ENCODE measurements at regions of chr14 and their contacts with region 1.

Region 1: GRCh38 chr14:100383727-100384158 is 60.6 kb downstream of the SLC25A47 start:
- DNase-seq: peak; percentile 90
- H3K4me3 ChIP-seq: no peak overlapping the region
- H3K27ac ChIP-seq: no peak overlapping the region
- H3K4me1 ChIP-seq: peaks cover under 1 to 40% (median 15%) of the 10 kb centered on the region in 6 donors
- H3K27me3 ChIP-seq: no peaks in the 10 kb centered on the region
- CTCF ChIP-seq: peak; percentile 50 to 86 (median 74)
- POLR2A ChIP-seq: no peak

Region 2: DNA sequence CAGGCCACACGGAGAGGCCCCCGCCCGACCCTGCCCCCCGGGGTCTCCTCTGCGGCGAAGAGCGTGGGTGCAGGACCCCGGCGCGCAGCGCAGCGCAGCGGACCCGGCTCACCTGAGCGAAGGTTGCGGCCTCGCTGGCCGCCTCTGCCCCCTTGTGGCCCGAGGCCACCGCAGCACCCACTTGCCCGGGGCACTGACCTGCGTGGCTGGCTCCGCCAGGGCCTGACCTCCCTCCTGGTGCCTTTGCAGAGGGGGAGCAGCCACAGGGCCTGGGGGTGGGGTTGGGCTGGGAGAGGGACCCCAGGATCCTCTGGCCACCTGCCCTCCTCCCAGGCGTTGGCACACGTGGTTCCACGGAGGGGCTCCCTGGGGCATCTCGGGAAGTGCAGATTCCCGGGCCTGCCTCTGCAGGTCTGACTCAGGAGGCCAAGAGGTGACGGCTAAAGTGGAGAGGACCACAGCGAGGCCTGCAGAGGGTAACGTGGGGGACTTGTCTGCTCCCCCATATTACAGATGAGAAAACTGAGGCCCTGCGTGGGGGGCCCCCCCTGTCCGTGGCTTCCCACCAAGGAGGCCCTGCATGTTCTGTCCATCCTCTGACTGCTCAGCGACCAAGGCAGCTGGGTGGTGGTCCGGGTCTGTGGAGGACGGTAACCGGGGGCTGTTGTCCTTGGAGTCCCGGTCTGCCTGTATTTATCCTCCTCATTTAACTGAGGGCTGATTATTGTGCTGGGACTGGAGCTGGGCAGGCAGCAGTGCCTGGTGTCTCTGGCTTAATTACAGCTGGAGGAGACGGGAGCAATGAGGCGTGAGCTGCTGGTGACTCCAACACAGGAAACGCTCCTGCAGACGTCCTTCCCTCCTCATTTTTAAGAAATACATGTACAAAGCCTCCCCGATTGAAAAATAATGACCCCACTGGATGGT is 271.3 kb after region 1 on chr14:
- intact Hi-C with region 1: loop called (anchors 5 kb)
- DNase-seq: no peak
- H3K4me3 ChIP-seq: peak overlapping the region in 1 of 8 donors; percentile 48
- H3K27ac ChIP-seq: no peak overlapping the region
- H3K4me1 ChIP-seq: peaks cover 0 to 15% (median 10%) of the 10 kb centered on the region in 6 donors
- H3K27me3 ChIP-seq: peaks cover 0 to 47% (median 15%) of the 10 kb centered on the region in 7 donors
- CTCF ChIP-seq: peak; percentile 28 to 84 (median 64)
- POLR2A ChIP-seq: no peak

Region 3: DNA sequence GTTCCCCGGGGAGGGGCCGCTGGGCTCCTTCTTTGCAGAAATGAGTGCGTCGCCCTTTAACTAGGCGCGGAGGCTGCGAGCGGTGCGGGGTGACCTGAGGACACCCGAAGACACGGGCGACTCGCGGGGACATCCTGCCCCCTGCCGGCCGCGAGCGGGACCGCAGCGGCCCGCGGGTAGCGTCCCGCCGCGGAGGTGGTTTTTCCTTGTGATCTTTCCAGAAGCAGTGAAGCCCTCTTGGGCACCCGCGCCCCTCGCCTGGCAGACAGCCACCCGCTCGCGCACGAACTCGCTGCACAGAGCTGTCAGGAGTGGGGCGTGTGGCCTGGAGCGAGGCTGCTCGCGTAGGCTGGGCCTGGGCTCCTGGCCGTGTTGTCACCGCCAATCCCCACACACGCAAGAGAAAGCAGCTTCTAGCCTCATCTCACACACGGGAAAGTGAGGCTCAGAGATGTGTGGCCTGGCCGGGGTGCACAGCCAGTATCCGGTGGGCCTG is 1244.8 kb after region 1 on chr14:
- intact Hi-C with region 1: loop called (anchors 10 kb)
- DNase-seq: peak; percentile 92
- H3K4me3 ChIP-seq: peak overlapping the region in 1 of 8 donors; percentile 45
- H3K27ac ChIP-seq: no peak overlapping the region
- H3K4me1 ChIP-seq: peaks cover 8 to 15% (median 13%) of the 10 kb centered on the region in 6 donors
- H3K27me3 ChIP-seq: peaks cover 0 to 15% (median 0%) of the 10 kb centered on the region in 7 donors
- CTCF ChIP-seq: peak; percentile 94 to 100 (median 99)
- POLR2A ChIP-seq: no peak

Measured in spleen (tissue), 13 donors.